AG04449 (cell line): ENCODE measurements at regions of chr20 and their contacts with region 1.

Region 1: DNA sequence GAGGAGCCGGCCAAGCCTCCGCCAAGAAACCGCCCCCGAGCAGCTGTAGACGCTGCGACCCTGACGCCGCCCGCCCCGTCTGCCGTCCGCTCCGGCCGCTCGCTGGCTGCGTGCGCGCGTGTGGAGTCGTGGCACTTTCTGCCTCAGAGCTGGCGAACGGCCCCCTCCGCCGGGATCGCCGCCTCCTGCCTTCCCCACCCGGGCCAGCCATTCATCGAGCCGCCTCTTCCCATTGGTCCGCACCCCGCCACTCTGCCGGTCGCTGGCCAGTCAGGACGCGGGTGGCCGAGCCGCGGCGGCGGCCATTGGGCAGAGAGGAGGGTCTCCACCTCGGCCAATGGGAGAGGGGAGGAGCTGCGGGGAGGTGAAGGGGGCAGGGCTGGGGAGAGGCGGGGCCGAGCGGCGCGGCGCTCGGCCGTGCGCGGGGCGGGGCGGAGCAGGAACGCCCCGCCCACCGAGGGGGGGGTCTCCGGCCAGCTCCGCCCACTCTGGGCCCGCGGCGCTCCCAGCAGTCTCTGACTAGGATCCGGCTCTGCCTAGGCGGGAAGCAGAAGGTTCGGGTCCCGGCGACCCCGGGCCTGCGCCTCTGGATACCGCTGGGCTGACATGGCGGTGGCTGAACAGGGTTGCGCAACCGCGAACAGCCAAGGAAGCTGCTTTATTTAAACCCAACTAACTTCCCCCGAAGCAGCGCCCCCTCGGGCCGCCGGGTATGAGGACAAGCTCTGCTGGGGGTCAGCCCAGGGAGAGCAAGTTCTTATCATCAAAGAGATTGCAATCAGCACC is at the start of gene RRBP1:
- DNase-seq: peak; percentile 78
- H3K4me3 ChIP-seq: peak within 1 kb of the TSS; percentile 80
- CTCF ChIP-seq: peak; percentile 69

Region 2: DNA sequence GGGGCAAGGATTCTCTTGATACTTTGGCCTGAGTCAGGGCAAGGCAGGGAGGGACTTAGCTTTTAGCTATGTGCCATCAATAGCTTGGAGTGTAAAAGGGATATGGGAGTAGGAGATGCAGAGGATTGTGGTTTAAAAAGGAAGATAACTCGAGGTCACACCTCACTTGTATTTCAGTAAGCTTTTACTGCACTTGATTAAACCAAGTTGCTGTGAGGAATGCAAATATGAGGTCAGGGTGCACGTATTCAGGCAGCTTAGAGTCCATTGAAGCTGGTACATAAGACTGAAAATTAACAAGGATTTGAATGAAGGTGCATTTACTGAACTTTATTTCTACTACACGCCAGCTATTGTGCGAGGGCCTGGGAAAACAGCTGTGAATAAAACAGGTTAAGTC is 80.3 kb before region 1 on chr20:
- CTCF ChIA-PET with region 1: no interaction called
- POLR2A ChIA-PET with region 1: no interaction called
- DNase-seq: no peak
- H3K4me3 ChIP-seq: no peak overlapping the region
- CTCF ChIP-seq: no peak

Region 3: DNA sequence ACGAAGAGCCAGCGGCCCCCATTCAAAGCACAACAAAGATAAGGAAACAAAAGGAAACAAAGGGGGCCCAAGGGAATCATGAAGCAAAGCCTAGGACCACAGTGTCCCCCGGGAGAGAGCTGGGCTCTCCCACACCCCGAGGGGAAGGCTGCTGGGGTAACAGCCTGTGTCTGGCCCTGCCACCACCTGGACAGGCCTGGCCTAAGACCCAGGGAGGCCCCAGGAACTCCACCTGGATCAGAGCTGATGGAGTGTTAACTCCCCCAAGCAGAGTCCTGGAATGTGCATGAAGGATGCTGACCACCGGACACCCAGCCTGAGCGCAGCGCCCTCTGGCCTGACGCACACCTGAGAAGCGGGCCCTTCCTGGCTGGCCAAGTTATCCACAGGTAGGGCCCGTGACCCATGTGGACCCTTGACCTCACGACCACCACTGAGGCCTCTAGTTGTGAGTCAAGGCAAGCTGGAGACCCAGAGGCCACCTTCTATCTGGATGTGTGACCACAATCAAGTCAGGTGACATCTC is 59.6 kb before region 1 on chr20:
- CTCF ChIA-PET with region 1: no interaction called
- POLR2A ChIA-PET with region 1: no interaction called
- DNase-seq: no peak
- H3K4me3 ChIP-seq: no peak overlapping the region
- CTCF ChIP-seq: no peak

Region 4: DNA sequence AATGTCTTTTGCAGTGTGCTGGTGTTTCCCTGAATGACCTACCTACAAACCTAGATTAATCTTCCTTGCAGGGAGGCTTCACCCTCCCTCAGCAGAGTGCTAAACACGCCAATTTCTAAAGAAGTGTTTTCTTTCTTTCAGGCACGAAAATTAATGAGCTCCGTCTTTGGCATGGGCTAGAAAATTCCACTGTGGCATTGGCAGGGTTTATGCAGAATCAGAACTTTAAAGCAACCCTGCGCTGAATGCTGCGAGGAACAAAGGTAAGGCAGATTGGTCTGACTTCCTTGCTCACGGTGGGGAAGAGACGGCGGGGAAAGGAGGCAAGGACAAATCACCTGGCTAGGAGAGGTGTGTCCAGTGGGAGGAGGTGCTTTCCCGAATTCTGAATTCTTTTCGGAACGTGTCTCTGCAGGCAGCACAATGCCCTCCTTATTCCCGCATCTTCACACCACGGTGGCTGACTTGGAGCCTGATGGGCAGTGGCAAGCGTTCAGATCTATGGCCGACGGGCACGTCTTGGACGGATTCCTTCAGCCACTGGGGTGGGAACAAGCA is 11.2 kb after region 1 on chr20:
- CTCF ChIA-PET with region 1: interaction called, 18 read pairs
- POLR2A ChIA-PET with region 1: interaction called, 9 read pairs
- DNase-seq: no peak
- H3K4me3 ChIP-seq: no peak overlapping the region
- CTCF ChIP-seq: no peak

Region 5: GRCh38 chr20:17747431-17747867 is 65.2 kb after region 1 on chr20:
- CTCF ChIA-PET with region 1: interaction called, 3 read pairs
- POLR2A ChIA-PET with region 1: interaction called, 12 read pairs
- DNase-seq: peak; percentile 42
- H3K4me3 ChIP-seq: peak overlapping the region; percentile 36
- CTCF ChIP-seq: no peak

Region 6: DNA sequence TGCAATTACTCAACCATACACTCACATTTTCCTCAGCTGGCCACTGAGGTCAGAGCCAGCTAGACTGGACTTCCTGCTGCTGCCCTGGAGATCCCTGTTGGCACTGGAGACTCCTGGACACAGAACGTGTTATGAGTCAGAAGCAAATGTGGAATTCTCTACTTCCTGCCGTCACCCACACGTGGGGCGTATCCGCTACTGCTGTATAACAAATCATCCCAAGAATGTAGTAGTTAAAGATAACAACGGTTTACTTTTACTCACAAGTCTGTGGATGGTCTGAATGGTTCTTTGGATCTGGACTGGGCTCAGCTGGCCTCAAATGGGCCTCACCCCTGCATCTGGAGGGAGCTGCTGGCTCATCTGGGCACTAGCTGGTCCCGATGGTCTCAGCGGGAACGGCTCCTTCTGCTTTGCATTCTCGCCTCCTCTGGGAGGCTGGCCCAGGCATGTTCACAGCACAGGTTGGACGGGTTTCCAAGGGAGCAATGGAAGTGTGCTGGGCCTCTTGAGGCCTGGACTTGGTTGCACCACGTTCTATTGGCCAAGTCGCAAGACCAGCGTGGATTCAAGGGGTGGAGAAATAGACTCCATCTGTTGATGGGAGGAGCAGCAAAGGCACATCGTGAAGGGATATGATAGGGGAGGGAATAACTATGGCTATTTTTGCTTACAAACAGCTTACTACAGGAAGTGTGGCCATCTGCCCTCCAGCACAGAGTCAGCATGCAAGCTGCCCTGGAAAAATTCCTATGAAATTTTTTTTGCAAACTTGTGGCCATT is 167.8 kb after region 1 on chr20:
- CTCF ChIA-PET with region 1: interaction called, 16 read pairs
- POLR2A ChIA-PET with region 1: interaction called, 15 read pairs
- DNase-seq: peak; percentile 84
- H3K4me3 ChIP-seq: no peak overlapping the region
- CTCF ChIP-seq: no peak

Region 7: DNA sequence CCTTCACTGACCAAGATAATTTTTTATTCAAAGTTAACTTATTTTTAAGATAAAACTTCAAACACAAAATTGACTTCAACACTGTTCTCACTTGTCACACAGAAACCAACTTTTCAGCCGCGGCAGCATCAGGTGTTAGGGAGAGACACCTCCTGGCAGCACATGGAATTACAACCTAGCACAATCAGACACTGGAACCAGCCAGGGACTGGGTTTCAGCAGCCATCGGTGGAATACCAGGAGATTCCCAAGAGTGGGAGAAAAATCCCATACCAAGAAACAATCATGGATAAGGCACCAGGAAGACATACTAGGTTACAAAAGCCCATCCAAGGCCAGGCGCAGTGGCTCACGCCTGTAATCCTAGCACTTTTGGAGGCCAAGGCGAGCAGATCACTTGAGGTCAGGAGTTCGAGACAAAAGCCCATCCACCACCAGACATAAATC is 216.3 kb after region 1 on chr20:
- CTCF ChIA-PET with region 1: interaction called, 140 read pairs
- POLR2A ChIA-PET with region 1: interaction called, 17 read pairs
- DNase-seq: no peak
- H3K4me3 ChIP-seq: no peak overlapping the region
- CTCF ChIP-seq: peak; percentile 88